GM10248 (cell line): ENCODE measurements at regions of chr1 and their contacts with region 1.

Region 1: DNA sequence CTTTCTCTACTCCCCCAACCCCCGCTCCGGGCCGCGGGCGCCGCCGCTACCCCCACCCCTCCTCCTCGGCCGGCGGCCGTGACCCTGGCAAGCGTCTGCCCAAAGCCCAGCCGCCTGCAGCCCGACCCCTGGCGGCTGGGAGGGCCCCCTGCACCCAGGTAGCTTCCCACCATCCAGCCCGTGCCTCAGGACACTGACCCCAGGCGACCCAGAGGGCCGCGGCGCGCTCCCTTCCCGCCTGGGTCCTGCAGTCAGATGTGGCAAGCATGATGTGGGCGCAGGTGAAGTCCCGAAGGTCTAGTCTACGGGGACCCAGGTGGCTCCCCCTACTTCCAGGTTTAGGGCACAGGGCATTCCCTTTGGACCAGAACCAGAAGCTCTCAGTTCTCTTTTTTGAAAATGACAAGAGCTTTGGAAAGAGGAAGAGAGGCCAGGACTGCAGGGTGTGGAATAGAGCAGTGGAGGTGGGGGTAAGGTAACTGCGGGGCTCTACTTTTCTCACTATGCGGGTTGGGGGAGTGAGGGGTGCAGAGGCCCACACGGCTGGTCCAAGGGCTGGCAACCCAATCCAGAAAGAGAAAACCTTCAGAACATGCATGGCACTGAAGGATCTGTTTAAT is at the start of gene DENND4B:
- DNase-seq: peak; percentile 91
- CTCF ChIP-seq: peak; percentile 96

Region 2: DNA sequence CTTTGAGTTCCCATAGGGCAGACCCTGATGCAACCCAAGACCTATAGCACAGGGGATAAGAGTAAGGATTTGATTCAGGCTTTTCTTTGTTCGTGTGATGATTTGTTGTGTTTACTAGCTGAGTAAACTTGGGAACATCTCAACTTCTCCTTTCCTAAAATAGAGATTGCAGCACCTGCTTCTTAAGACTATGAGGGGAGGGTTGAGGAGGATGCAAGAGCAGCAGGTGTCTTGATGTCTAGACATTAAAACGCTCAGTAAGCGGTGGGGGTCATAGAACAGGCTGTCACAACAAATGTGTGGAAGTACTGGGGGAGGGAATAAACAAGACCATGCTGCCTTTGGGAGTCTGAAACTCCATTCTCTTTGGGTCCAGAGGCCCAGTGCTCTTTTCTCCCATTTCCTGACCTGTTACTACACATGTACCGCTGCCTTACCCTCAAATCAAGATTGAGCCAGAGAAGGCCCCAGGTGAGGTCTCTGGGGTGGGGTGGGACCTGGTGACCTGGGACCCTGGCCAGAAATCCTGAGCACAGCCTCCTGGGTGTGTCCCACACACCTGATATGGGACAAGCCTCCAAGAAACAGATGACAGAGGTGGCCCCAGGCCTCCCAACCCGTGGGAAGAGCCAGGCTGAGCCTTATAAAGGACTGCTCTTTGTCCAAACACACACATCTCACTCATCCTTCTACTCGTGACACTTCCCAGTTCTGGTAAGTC is 530.7 kb before region 1 on chr1 and contains the start of gene S100A7A:
- CTCF ChIA-PET with region 1: no interaction called
- POLR2A ChIA-PET with region 1: no interaction called
- DNase-seq: no peak
- CTCF ChIP-seq: no peak

Region 3: DNA sequence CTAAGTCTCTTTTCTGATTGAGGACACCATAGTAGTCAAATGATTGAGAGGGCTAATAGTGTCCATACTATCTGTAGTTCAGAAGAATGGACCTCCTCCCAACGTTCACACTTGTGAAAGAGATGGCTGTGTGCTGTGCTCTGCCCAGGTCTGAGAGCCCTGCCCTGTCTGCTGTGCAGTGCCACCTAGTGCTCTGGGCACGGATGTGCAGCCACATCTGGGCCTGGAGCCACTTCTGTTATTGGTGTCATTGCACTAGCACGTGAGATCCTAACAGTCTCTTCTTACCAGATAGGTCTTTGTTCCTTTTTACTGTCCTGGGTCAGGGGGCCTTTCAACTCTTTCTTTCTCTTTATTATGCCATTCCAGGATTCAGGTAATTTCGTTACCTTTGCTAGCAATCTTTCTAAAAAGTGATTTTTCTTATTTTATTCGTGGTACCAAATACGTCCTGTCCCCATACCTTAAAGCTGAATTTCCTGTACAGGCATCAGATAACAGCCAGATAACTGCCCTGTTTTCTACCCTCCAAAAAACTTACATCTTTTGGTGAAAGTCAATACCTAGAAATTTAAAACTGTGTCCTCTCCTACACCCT is 197.2 kb before region 1 on chr1:
- CTCF ChIA-PET with region 1: no interaction called
- POLR2A ChIA-PET with region 1: no interaction called
- DNase-seq: peak; percentile 87
- CTCF ChIP-seq: peak; percentile 96

Region 4: GRCh38 chr1:153805042-153805745 is 141.5 kb before region 1 on chr1:
- CTCF ChIA-PET with region 1: interaction called, 15 read pairs
- POLR2A ChIA-PET with region 1: no interaction called
- DNase-seq: peak; percentile 89
- CTCF ChIP-seq: no peak

Region 5: GRCh38 chr1:153922972-153923925 is 23.5 kb before region 1 on chr1 and contains the start of gene GATAD2B:
- CTCF ChIA-PET with region 1: interaction called, 108 read pairs
- POLR2A ChIA-PET with region 1: interaction called, 16 read pairs
- DNase-seq: peak; percentile 98
- CTCF ChIP-seq: no peak

Region 6: GRCh38 chr1:153958111-153958960 is 11.6 kb after region 1 on chr1 and contains the start of gene CRTC2:
- CTCF ChIA-PET with region 1: interaction called, 33 read pairs
- POLR2A ChIA-PET with region 1: interaction called, 6 read pairs
- DNase-seq: peak; percentile 97
- CTCF ChIP-seq: no peak

Region 7: DNA sequence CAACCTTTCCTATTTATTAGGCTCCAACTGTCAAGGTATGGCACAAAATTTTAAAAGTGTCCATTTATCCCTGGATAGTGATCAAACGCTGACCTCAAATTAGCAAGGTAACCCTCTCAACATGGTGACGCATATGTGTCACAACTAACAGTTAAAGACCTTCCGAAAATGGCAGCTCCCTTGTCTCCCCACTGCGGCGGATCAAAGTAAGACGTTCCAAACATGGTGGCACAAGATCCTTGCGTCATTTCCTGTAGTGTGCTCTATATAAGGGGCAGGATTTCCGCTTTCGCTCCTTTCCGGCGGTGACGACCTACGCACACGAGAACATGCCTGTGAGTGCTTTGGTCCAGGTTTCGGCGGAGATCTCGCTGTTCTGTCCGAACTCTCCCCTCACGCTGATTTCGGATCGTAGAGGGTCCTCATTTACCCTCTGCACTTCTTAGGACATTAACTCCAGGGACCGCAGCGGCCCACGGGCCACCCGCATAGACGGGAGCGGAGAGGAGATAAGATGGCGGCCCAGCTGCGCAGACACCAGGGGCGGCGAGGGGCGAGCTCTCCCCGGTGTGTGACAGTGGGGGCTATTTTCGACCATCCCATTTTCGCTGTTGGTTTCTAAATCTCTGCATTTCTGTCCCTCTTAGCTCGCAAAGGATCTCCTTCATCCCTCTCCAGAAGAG is 43.9 kb after region 1 on chr1 and contains the start of gene RPS27:
- CTCF ChIA-PET with region 1: interaction called, 19 read pairs
- POLR2A ChIA-PET with region 1: interaction called, 4 read pairs
- DNase-seq: peak; percentile 95
- CTCF ChIP-seq: no peak

Region 8: GRCh38 chr1:154062309-154062708 is 115.6 kb after region 1 on chr1:
- CTCF ChIA-PET with region 1: no interaction called
- POLR2A ChIA-PET with region 1: no interaction called
- DNase-seq: no peak
- CTCF ChIP-seq: no peak

Region 9: GRCh38 chr1:154141240-154141639 is 194.5 kb after region 1 on chr1:
- CTCF ChIA-PET with region 1: no interaction called
- POLR2A ChIA-PET with region 1: no interaction called
- DNase-seq: no peak
- CTCF ChIP-seq: no peak